AG04450 (cell line): ENCODE measurements at regions of chr3 and their contacts with region 1.

Region 1: DNA sequence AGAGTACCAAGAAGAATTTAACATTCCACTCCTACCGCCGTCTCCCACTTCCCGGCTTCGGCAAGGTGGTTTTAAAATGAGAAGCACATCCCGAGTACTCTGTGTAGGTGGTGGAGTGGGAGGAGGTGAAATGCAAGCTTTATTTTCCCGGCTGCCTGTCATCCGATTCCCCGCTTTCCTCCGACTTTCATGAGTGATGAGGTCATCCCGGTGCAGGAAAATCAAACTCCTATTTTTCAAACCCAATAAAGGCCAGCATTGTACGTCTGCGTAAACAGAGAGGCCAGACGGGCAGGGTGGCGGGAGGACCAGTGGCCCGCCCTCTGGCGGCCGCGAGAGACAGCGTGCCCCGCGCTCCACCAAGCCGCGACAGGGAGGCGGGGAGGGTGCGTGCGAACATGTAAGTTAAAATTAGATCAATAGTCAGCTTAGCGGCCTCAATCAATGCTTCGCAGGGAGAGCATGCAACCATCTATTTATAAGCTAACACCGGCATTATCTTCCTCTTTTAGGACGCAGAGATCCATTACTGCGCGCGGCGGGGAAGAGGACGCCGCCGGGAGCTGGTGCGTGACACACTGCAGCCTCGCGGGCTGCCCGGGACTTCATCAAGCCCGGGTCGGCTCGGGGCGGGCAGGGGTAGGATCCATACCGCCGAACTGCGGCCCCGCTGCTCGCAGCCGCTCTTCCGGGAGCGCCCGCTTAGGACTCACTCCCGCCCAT is 163.3 kb downstream of the CD47 start:
- DNase-seq: peak; percentile 18
- H3K4me3 ChIP-seq: peak overlapping the region; percentile 66
- H3K27ac ChIP-seq: no peak overlapping the region
- H3K27me3 ChIP-seq: no peaks in the 10 kb centered on the region
- CTCF ChIP-seq: peak; percentile 93

Region 2: GRCh38 chr3:107660306-107660976 is 267.1 kb before region 1 on chr3:
- CTCF ChIA-PET with region 1: interaction called, 29 read pairs
- POLR2A ChIA-PET with region 1: no interaction called
- DNase-seq: no peak
- H3K4me3 ChIP-seq: no peak overlapping the region
- H3K27ac ChIP-seq: no peak overlapping the region
- H3K27me3 ChIP-seq: no peaks in the 10 kb centered on the region
- CTCF ChIP-seq: peak; percentile 66

Region 3: GRCh38 chr3:107870096-107870495 is 57.4 kb before region 1 on chr3:
- CTCF ChIA-PET with region 1: interaction called, 11 read pairs
- POLR2A ChIA-PET with region 1: no interaction called
- DNase-seq: no peak
- H3K4me3 ChIP-seq: no peak overlapping the region
- H3K27ac ChIP-seq: no peak overlapping the region
- H3K27me3 ChIP-seq: no peaks in the 10 kb centered on the region
- CTCF ChIP-seq: no peak

Region 4: DNA sequence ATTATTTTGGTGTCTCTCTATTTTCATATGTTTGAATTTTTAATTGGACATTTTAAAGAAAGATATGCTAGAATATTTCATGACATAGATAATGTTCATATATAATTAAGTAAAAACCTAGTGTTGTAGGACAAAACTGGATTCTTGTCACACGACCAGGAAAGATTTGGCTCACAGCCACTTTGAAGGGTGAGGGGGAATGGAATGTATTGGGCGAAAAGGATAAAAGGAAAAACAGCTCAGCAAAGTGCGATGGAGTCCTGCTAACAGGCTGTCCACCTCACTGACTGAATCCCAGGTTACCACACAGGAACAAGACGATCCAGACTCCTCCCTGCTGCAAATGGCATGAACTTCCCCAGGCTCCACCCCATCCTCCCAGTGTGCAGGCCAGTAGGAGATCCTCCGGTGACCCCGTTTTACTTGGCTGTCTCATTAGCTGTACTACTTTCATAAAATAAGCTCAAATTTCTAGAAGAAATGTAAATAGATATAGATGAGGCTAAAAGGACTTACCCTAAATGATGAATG is 22.9 kb before region 1 on chr3:
- CTCF ChIA-PET with region 1: interaction called, 14 read pairs
- POLR2A ChIA-PET with region 1: no interaction called
- DNase-seq: no peak
- H3K4me3 ChIP-seq: no peak overlapping the region
- H3K27ac ChIP-seq: no peak overlapping the region
- H3K27me3 ChIP-seq: no peaks in the 10 kb centered on the region
- CTCF ChIP-seq: no peak

Region 5: DNA sequence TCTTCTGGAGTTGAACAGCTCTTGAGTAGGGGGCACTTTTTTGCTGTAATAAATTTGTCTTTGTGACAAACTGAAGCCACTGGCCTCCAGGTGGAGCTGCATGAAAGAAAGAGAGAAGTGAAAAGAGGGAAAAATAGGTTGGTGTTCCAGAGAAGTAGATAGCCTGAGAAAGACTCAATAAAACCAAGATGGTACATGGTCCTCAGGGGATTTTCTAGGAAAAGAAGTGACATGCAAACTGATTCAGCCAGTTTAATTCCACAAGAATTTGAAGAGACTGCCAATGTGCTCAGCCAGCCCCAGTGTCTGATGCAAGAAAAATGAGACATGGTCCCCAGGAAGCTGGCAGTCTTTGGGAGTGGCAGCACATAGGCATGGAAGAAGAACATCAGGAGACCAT is 10.6 kb after region 1 on chr3:
- CTCF ChIA-PET with region 1: interaction called, 17 read pairs
- POLR2A ChIA-PET with region 1: no interaction called
- DNase-seq: no peak
- H3K4me3 ChIP-seq: no peak overlapping the region
- H3K27ac ChIP-seq: no peak overlapping the region
- H3K27me3 ChIP-seq: peaks cover 3% of the 10 kb centered on the region
- CTCF ChIP-seq: peak; percentile 57

Region 6: DNA sequence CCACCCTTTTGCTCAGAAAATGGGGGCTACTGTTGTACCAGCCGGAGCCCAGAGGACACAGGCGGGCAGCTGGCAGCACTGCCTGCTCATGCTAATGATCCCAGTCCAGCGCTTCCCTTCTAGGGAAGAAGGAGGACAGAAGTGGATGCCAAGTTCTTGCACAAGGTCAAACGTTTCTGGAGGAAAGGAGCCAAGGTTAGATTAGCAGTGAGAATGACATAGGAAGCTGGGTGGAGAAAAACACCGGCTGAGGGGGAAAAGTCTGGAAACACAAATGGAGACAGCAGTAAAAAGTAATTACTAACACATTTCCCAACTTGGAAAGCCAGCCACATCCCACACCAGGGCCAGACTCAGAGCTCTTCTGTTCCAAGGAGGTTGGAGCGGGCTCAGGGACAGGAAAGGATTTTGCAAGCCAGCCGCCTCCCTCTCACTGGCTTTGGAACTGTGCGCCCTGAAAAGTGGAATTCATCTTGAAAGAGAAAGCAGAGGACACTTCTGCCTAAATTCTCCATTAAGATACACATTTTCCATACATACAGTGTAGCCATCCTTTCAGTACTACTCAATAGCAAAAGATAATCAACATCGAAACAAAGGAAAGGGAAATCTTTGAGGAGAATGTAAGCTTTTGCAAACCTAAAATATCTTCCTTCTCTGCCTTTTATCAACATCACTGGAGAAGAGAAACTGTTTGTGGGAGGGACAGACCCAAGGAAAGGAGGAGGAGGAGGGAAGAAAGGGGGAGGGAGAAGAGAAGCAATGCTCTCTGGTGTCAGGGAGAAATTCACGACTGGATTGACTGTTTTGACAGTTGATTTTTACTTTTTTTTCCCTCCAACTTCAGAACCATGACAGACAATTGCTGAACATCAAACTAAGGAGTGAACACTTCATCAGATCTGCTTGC is 29.7 kb after region 1 on chr3:
- CTCF ChIA-PET with region 1: interaction called, 11 read pairs
- POLR2A ChIA-PET with region 1: no interaction called
- DNase-seq: no peak
- H3K4me3 ChIP-seq: peak overlapping the region; percentile 2
- H3K27ac ChIP-seq: no peak overlapping the region
- H3K27me3 ChIP-seq: no peaks in the 10 kb centered on the region
- CTCF ChIP-seq: no peak

Region 7: DNA sequence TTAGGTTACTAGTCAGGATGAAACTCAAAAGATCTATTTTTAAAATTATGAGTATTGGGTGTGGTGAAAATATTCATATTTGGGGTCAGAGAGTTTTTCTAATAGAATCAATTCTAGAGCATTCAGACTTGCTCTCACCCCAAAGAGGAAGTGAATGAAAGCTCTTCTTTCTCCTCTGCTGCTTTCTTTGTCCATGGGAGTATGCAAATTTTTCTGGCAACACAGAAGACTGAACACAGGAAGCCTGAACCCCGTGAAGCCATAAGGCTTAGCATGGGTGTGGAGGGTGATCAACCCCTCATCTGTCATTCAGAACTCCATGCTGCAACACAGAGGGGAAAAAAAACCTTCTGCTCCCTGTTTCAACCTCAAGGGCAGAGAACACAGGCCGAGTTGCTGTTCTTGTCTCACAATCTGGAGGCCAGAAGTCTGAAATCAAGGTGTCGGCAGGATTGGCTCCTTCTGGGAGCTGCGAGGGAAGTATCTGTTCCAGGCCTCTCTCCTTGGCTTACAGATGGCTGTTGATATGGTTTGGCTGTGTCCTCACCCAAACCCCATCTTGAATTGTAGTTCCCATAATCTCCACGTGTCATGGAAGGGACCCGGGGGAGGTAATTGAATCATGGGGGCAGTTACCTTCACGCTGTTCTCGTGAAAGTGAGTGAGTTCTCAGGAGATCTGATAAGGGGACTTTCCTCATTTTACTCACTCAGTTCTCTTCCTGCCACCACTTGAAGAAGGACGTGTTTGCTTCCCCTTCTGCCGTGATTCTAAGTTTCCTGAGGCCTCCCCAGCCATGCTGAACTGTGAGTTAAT is 197.0 kb after region 1 on chr3:
- CTCF ChIA-PET with region 1: no interaction called
- POLR2A ChIA-PET with region 1: no interaction called
- DNase-seq: no peak
- H3K4me3 ChIP-seq: no peak overlapping the region
- H3K27ac ChIP-seq: no peak overlapping the region
- H3K27me3 ChIP-seq: no peaks in the 10 kb centered on the region
- CTCF ChIP-seq: no peak

Region 8: DNA sequence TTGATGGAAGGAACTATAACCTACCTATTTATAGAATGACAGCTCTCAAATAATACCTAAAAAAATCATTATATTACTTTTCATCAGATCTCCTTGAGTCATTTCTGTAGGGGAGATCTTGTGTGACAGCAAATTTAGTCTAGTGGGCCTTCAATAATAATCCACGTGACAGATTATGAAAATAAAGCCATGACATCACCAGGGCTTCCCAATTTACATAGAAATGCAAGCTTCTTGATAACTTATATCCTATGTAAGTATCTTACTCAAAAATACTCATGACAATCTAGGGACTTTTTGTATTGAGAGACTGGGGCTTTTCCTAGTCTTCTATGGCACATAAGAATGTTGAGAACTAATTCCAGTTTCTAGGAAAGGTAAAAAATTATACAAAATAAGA is 273.1 kb after region 1 on chr3:
- CTCF ChIA-PET with region 1: no interaction called
- POLR2A ChIA-PET with region 1: no interaction called
- DNase-seq: no peak
- H3K4me3 ChIP-seq: no peak overlapping the region
- H3K27ac ChIP-seq: no peak overlapping the region
- H3K27me3 ChIP-seq: no peaks in the 10 kb centered on the region
- CTCF ChIP-seq: no peak

Region 9: GRCh38 chr3:108406661-108407206 is 479.2 kb after region 1 on chr3:
- CTCF ChIA-PET with region 1: interaction called, 28 read pairs
- POLR2A ChIA-PET with region 1: interaction called, 3 read pairs
- DNase-seq: peak; percentile 16
- H3K4me3 ChIP-seq: no peak overlapping the region
- H3K27ac ChIP-seq: no peak overlapping the region
- H3K27me3 ChIP-seq: no peaks in the 10 kb centered on the region
- CTCF ChIP-seq: peak; percentile 80